Right cardiac atrium (tissue), 5 donors: ENCODE measurements at regions of chr3 and their contacts with region 1.

Region 1: DNA sequence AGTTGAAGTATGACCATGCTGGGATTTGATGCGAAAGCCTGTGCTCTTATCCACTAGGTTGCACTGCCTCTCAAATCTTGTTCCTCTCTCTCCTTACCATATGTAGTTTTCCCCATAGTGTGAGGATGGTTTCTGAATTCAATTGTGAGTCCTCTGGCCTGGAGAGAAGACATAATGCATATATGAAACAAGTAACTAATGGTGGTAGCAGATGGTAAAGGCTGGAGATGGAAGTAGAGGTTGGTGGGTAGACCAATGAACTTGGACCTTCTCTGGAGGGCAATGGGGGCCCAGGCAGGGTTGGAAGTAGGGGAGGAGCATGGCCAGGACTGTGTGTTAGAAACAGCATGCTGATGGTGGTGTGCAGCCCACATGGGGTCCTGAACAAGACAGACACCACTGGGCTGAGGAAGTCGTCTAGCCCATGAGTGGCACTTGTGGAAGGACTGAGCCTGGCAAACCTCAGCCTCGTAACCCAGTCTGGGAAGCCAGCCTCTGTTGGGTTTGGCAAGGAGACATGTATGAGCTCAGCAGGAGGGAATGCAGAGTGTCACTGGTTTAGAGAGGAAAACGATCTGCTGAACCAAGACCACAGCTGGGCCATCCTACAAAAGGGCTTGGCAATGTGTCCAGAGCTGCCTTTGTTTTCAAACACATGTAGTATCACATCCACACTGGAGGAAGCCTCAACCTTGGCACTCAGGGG is 18.5 kb upstream of the LMCD1 start:
- DNase-seq: peak; percentile 70 to 83 (median 73)
- ATAC-seq: peak; percentile 90 to 93
- H3K4me3 ChIP-seq: no peak overlapping the region
- H3K27ac ChIP-seq: peak overlapping the region; percentile 90
- H3K4me1 ChIP-seq: peaks cover 12% of the 10 kb centered on the region
- H3K27me3 ChIP-seq: no peaks in the 10 kb centered on the region

Region 2: DNA sequence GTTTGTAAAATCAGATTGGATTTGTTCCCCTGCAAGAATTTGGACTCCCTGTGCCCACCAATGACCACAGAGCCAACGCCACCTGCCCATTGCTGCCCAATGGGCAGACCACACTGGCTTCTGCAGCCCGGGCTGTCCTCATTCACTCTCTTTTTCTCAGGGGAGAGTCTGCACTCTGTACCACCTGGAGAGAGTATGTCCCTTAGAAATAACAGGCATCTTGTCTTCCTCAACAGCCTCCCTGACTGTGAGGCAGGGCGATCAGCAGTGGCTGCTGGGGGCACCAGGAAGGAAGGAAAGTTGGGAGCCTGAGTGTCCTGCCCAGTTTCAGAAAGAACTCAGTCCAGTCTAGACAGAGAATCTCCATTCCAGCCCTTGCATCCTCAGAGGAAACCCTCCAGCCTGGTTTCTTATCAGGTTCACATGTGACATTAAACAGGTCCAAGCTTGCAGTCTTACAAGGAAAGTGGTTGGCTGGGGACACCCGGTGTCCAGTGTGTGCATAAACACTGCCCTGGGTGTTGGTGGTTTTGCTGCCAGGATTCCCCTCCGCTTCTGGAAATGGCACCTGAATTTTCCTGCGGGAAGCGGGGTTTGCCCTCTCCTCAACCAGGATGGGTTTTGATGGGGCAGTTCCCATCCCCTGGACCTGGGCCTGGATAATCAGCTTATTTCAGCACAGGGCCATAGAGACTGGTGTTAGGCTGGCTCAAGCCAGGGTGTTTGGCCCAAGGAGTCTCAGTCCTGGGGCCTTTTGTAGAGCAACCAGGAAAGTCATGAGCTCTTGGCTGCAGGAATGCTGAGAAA is 124.3 kb after region 1 on chr3:
- intact Hi-C with region 1: loop called in 1 of 4 experiments (anchors 5 kb)
- DNase-seq: peak; percentile 79 to 92 (median 87)
- ATAC-seq: peak; percentile 97 to 98
- H3K4me3 ChIP-seq: no peak overlapping the region
- H3K27ac ChIP-seq: no peak overlapping the region
- H3K4me1 ChIP-seq: peaks cover 10% of the 10 kb centered on the region
- H3K27me3 ChIP-seq: no peaks in the 10 kb centered on the region